Upper lobe of right lung (tissue), 1 donor: ENCODE measurements at regions of chr7 and their contacts with region 1.

Region 1: GRCh38 chr7:149811221-149811620 is 27.0 kb upstream of the ZNF862 start:
- DNase-seq: no peak
- ATAC-seq: no peak
- H3K4me3 ChIP-seq: no peak overlapping the region
- H3K27ac ChIP-seq: no peak overlapping the region
- H3K4me1 ChIP-seq: no peaks in the 10 kb centered on the region
- H3K27me3 ChIP-seq: no peaks in the 10 kb centered on the region
- CTCF ChIP-seq: no peak

Region 2: GRCh38 chr7:149873074-149873969 is 62.1 kb after region 1 on chr7 and contains the start of gene ATP6V0E2:
- intact Hi-C with region 1: loop called (anchors 10 kb)
- DNase-seq: peak; percentile 97
- ATAC-seq: peak; percentile 97
- H3K4me3 ChIP-seq: peak within 1 kb of the TSS; percentile 87
- H3K27ac ChIP-seq: peak within 1 kb of the TSS; percentile 70
- H3K4me1 ChIP-seq: peaks cover 14% of the 10 kb centered on the region
- H3K27me3 ChIP-seq: no peaks in the 10 kb centered on the region
- CTCF ChIP-seq: no peak
- total RNA-seq, gene ATP6V0E2: 19.6 TPM